ENCODE measurements at regions of chr2 and their contacts with region 1.

Region 1: DNA sequence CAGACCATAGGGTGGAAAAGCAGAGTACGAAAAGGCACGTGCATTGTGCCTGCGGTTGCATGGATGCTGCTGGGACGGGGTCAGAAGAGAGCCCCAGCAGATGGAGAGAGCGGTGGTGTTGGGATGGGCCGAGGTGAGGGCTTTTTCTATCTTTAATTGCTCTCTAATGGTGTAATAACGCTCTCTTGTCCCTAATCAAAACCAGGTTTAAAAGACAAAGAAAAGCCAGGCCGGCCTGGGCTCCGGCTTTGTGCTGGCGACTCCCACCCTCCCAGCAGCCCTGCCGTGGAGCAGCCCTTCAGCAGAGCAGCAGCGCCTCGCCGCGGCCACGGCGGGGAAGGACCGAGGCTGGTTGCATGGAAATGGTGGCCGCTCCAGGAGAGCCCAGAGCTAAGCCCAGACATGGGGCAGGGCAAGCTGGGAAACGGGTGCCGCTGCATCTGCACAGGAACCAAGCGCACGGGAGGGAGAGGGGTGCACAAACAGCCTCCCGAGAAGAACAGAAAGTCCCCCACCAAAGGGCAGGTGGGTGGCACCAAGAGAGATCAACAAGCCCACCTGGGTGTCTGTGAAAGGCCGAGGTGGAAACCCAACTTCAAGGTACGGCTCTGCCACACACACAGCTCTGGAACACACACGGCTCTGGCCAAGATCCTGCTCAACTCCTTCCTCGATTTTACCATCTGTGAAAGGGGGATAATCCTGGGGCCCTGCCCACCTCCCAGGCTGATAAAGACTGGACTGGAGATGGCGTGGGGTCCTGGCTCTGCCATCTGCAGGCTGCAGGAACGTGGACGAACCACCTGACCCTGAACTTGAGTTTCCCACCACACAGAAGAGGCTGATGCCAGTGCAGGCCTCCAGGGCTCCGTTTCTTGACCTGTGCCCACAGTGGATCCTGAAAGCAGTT is 15.0 kb downstream of the HS1BP3 start:
- DNase-seq: peak; percentile 78
- ATAC-seq: peak; percentile 95
- H3K4me3 Mint-ChIP-seq: no peak overlapping the region
- H3K27ac Mint-ChIP-seq: no peak overlapping the region
- H3K4me1 Mint-ChIP-seq: no peaks in the 10 kb centered on the region
- H3K27me3 Mint-ChIP-seq: no peaks in the 10 kb centered on the region

Region 2: GRCh38 chr2:20446917-20447436 is 189.0 kb before region 1 on chr2 and contains the start of gene RHOB:
- CTCF ChIA-PET with region 1: interaction called, 11 read pairs
- POLR2A ChIA-PET with region 1: no interaction called
- intact Hi-C with region 1: loop called in 1 of 2 experiments (anchors 1 kb)
- DNase-seq: peak; percentile 93
- ATAC-seq: peak; percentile 99
- H3K4me3 Mint-ChIP-seq: peak within 1 kb of the TSS; percentile 71
- H3K27ac Mint-ChIP-seq: no peak within 1 kb of the TSS
- H3K4me1 Mint-ChIP-seq: no peaks in the 10 kb centered on the region
- H3K27me3 Mint-ChIP-seq: peaks cover 23% of the 10 kb centered on the region
- total RNA-seq, gene RHOB: 7.5 TPM